ENCODE measurements at regions of chr16 and their contacts with region 1.

Region 1: DNA sequence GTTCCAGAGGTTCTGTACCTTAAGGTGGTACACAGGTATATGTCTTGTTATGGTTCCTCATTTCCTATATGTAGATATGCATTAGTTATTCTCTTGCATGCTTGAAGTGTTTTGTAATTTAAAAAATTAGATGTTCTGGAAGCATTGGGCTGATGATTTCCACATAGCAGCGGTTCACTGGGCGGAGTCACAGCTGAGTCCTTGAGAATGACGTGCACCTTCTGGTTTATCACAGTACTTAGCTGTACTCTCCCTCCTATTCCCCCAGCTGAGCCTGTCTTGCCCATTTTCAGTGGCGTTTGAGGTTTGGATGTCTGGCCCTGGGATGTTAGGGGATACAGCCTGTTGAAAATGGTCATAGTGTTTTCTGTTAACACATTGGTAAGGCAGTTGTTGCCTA is 327.1 kb downstream of the SNX29 start:
- DNase-seq: no peak
- ATAC-seq: peak in 2 of 8 donors; percentile 56 to 76
- H3K4me3 ChIP-seq: no peak overlapping the region
- H3K27ac ChIP-seq: no peak overlapping the region
- H3K4me1 ChIP-seq: peaks cover 0 to 12% (median 3%) of the 10 kb centered on the region in 9 donors
- H3K27me3 ChIP-seq: no peaks in the 10 kb centered on the region
- CTCF ChIP-seq: no peak

Region 2: DNA sequence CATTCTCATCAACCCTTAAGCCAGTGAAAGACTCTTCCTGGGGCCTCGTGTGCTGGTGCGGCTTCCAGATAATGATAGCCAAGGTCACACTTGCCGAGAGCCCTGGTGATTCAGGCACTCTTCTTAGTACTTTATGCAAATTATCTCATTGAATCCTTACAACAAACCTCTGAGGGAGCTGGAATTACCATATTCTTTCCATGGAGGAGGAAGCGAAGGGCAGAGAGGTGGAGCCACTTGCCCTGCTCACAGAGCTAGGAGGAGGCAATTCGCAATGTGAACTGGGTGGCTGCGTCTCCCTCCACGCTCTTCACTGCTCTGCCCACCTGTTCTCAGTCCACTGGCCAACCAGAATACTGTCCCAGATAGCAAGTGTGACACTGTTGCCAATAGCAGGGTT is 82.5 kb after region 1 on chr16:
- intact Hi-C with region 1: loop called in 1 of 10 experiments (anchors 10 kb)
- DNase-seq: no peak
- ATAC-seq: no peak
- H3K4me3 ChIP-seq: no peak overlapping the region
- H3K27ac ChIP-seq: no peak overlapping the region
- H3K4me1 ChIP-seq: no peaks in the 10 kb centered on the region
- H3K27me3 ChIP-seq: no peaks in the 10 kb centered on the region
- CTCF ChIP-seq: no peak